ENCODE measurements at regions of chr12 and their contacts with region 1.

Region 1: DNA sequence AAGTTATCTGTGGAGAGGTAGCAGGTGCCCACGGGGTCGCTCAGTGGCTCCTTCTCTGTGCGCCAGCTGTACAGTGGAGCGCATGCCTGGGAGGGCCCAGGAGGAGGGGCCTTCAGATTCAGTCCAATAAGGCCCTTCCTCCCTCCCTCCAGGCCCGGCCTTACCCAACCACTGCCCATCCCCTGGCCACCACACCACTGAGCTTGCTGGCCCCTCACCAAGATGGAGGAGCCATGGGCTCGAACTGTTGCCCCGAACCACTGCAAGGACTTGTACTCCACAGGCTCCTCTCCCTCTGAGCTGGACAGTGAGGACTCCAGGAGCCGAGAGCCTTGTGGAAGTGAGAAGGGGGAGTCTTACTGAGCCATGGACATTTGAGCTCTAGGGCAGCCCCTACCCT is 9.8 kb downstream of the ITGA5 start:
- DNase-seq: peak in 1 of 2 experiments; percentile 30
- H3K4me3 ChIP-seq: no peak overlapping the region
- H3K27ac ChIP-seq: no peak overlapping the region
- H3K4me1 ChIP-seq: peaks cover 12% of the 10 kb centered on the region; the same call in 1 of the 2 replicates
- H3K27me3 ChIP-seq: no peaks in the 10 kb centered on the region
- CTCF ChIP-seq: no peak

Region 2: DNA sequence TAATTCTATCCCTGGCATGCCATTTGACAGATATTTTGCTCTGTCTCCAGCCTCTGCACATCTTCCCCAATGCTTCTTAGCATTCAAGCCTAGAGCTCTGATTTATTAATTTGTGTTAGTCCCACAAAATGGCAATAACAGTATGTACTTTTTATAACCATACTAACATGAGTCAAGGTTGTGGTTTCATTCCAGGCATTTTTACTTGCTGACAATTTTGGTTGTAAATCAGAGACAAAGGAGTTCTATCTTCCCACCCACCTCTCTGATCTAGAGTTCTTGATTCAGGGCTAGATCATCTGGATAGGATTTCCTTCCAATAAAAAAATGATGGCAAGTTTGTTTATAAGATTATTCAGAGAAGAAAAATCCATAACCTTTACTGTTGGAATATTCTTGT is 639.0 kb before region 1 on chr12:
- CTCF ChIA-PET with region 1: no interaction called
- POLR2A ChIA-PET with region 1: no interaction called
- intact Hi-C with region 1: no loop called
- DNase-seq: peak in 1 of 2 experiments; percentile 92
- H3K4me3 ChIP-seq: no peak overlapping the region
- H3K27ac ChIP-seq: peak overlapping the region; percentile 53
- H3K4me1 ChIP-seq: peaks cover 39% of the 10 kb centered on the region
- H3K27me3 ChIP-seq: no peaks in the 10 kb centered on the region
- CTCF ChIP-seq: no peak

Region 3: GRCh38 chr12:54294152-54294952 is 114.9 kb before region 1 on chr12:
- CTCF ChIA-PET with region 1: interaction called, 10 read pairs
- POLR2A ChIA-PET with region 1: no interaction called
- intact Hi-C with region 1: no loop called
- DNase-seq: peak in 1 of 2 experiments; percentile 54
- H3K4me3 ChIP-seq: no peak overlapping the region
- H3K27ac ChIP-seq: no peak overlapping the region
- H3K4me1 ChIP-seq: peaks cover under 1% of the 10 kb centered on the region; the same call in 1 of the 2 replicates
- H3K27me3 ChIP-seq: no peaks in the 10 kb centered on the region
- CTCF ChIP-seq: peak; percentile 93

Region 4: DNA sequence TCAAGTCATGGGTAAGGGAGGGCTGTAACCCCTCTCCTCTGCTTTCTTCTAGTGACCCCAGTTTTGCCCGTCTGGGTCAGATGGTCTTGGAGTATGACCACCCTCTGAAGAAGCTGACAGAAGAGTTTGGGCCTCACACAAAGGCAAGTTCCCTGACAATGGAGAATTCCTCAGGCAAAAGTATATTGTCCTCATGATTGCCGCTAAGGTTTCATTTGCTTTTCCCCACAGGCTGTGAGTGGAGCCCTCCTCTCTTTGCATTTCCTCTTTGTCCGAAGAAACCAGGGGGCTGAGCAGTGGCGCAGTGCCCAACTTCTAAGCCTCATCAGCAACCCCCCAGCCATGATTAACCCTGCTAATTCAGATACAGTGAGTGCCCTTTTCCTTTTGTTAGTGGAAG is 100.3 kb after region 1 on chr12:
- CTCF ChIA-PET with region 1: no interaction called
- POLR2A ChIA-PET with region 1: no interaction called
- intact Hi-C with region 1: no loop called
- DNase-seq: no peak
- H3K4me3 ChIP-seq: no peak overlapping the region
- H3K27ac ChIP-seq: no peak overlapping the region
- H3K4me1 ChIP-seq: no peaks in the 10 kb centered on the region
- H3K27me3 ChIP-seq: peaks cover 62% of the 10 kb centered on the region
- CTCF ChIP-seq: no peak